ENCODE measurements at regions of chr12 and their contacts with region 1.

Region 1: DNA sequence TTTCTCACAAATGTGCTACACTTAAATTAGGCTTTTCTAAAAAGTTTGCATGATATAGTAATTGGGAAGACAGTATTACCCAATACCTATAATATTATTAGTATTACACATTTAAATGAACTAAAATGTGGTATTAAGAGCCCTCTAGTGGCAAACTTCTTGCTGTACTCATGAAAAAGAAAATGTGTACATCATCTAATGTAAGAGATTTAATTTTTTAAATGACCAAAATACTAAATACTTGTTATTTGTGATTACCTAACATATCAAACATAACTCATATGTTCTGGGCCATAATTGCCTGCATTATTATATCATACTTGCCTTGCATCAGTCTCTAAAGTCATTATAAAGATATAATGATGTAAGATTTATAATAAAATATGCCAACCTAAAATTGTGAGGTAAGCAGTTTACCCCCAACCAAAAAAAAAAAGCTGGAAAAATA is 64.2 kb downstream of the DNAI7 start:
- DNase-seq: no peak
- H3K4me3 ChIP-seq: no peak overlapping the region
- H3K27ac ChIP-seq: no peak overlapping the region
- H3K4me1 ChIP-seq: no peaks in the 10 kb centered on the region
- H3K27me3 ChIP-seq: no peaks in the 10 kb centered on the region
- CTCF ChIP-seq: peak in 3 of 4 experiments; percentile 20 to 58 (median 38)
- EP300 ChIP-seq: no peak
- POLR2A ChIP-seq: no peak

Region 2: DNA sequence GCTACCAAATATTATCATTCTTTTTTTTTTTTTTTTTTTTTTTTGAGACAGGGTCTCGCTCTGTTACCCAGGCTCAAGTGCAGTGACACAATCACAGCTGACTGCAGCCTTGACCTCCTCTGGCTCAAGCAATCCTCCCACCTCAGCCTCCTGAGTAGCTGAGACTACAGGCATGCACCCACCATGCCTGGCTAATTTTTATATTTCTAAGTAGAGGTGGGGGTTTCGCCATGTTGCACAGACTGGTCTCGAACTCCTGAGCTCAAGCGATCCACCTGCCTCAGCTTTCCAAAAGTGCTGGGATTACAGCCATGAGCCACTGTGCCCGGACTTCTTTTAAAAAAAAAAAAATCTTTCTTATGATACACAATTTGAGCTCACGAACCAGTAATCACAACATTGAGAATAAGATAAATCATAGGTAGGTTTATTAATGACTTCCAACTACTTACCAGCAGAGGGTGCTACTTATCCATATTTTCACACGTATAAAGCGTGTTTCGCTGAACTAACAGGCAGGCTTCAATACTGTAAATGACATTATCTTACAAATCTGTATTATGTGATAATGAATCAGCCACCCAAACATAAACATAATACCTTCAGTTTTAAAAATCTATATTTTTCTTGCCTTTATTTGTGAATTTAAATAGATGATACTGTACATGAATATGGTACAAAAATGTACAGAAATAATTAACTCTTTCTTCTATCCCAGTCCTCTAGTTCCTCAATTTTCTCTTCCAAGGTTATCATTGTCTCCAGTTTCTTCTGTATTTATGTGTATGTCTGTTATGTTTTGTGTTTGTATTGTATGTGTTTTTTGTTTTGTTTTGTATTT is 139.3 kb before region 1 on chr12:
- intact Hi-C with region 1: loop called (anchors 5 kb)
- DNase-seq: no peak
- H3K4me3 ChIP-seq: no peak overlapping the region
- H3K27ac ChIP-seq: no peak overlapping the region
- H3K4me1 ChIP-seq: no peaks in the 10 kb centered on the region
- H3K27me3 ChIP-seq: no peaks in the 10 kb centered on the region
- CTCF ChIP-seq: peak in 3 of 4 experiments; percentile 43 to 57 (median 50)
- EP300 ChIP-seq: no peak
- POLR2A ChIP-seq: no peak

Region 3: DNA sequence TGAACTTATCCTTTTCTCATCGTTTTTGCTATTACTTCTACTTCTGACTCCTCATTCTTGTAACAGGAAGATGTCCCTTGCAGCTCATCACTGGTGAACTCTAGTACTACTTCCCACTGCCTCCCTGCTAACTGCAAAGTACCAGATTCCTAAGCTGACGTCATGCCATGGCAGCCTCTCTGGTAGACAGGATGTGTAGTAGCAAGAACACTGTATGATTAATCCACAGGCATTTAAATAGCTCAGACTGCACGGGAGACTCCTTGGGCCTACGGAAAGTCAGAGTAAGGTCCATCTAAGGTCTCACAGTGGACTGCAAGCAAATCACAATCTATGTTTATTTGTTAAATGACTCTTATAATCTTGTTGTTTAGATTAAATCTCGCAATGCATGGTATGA is 20.7 kb after region 1 on chr12:
- intact Hi-C with region 1: no loop called
- DNase-seq: peak; percentile 69
- H3K4me3 ChIP-seq: no peak overlapping the region
- H3K27ac ChIP-seq: peak overlapping the region in 3 of 4 donors; percentile 3 to 66 (median 34)
- H3K4me1 ChIP-seq: peaks cover 0 to 13% (median 0%) of the 10 kb centered on the region in 4 donors
- H3K27me3 ChIP-seq: no peaks in the 10 kb centered on the region
- CTCF ChIP-seq: no peak
- EP300 ChIP-seq: no peak
- POLR2A ChIP-seq: no peak